Activated B cell treated with CpG ODN at 0.5 μM for 24 hours (primary cell): ENCODE measurements at regions of chr19 and their contacts with region 1.

Region 1: GRCh38 chr19:43519436-43520088 is 7.4 kb downstream of the ETHE1 start:
- DNase-seq: peak; percentile 57
- ATAC-seq: peak; percentile 51
- H3K4me3 Mint-ChIP-seq: peak overlapping the region; percentile 44
- H3K27ac Mint-ChIP-seq: peak overlapping the region; percentile 15
- H3K4me1 Mint-ChIP-seq: peaks cover 18% of the 10 kb centered on the region
- H3K27me3 Mint-ChIP-seq: no peaks in the 10 kb centered on the region
- CTCF ChIP-seq: peak; percentile 62

Region 2: DNA sequence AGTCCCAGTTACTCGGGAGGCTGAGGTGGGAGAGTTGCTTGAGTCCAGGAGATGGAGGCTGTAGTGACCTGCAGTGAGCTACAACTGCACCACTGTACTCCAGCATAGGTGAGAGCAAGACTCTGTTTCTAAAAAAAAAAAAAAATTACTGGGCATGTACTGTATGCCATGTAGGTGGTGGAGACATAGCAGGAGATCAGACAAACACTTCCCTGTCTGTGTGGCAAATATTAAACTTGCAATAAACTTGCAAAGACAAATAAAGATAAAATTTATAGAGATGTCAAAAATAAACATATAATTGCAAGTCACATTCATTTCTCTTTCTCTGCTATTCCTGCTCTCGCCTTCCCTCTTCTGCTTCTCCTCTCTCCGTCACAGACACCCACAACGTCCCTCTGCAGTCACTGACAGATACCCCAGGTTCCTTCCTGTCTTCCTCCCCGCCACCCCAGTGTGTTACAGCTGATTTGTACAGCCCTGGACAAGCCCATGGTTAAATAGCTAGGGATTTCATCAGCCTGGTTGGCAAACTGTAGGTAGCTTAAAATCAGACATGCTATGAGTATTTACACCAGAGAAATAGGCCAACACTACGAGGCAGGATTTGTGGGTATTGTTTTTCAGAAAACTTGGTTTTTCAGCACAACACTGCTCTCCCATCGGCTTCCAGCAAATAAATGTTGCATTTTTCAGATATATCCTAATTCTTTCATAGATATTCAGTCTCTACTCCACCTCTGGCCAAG is 167.4 kb before region 1 on chr19:
- CTCF ChIA-PET with region 1: no interaction called
- POLR2A ChIA-PET with region 1: no interaction called
- intact Hi-C with region 1: no loop called
- DNase-seq: no peak
- ATAC-seq: no peak
- H3K4me3 Mint-ChIP-seq: no peak overlapping the region
- H3K27ac Mint-ChIP-seq: no peak overlapping the region
- H3K4me1 Mint-ChIP-seq: no peaks in the 10 kb centered on the region
- H3K27me3 Mint-ChIP-seq: peaks cover 13% of the 10 kb centered on the region
- CTCF ChIP-seq: no peak

Region 3: DNA sequence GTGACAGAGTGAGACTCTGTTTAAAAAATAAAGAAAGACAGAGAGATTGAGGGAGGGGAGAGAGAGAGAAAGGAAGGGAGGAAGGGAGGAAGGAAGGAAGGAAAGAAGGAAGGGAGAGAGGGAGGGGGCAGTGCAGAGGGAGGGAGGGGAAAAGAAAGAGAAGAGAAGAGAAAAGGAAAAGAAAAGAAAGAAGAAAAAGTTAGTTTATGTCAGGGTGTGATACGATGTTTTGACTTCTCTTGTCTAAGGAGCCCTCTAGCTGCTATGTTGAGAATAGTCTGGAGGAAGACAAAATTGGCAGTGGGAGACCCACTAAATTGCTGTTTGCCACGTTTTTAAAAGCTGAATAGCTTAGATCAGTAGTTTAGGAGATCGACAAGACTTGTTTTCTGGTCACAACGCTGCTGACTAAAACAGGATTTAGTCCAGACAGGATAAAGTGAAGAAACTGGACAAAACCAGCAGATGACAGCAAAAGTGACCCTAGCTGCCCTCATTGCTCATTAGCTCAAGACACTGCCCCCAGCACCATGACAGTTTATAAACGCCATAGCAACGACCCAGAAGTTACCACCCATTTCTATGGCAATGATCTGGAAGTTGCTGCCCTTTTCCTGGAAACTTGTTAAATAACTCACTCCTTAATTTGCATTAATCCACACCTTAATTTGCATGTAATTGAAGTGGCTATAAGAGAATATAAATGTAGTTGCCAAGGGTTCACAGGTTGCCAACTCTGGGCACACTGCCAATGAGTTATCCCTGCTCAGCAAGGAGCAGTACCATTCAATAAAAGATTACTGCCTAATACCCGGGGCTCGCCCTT is 93.8 kb before region 1 on chr19:
- CTCF ChIA-PET with region 1: interaction called, 55 read pairs
- POLR2A ChIA-PET with region 1: no interaction called
- intact Hi-C with region 1: no loop called
- DNase-seq: no peak
- ATAC-seq: no peak
- H3K4me3 Mint-ChIP-seq: no peak overlapping the region
- H3K27ac Mint-ChIP-seq: no peak overlapping the region
- H3K4me1 Mint-ChIP-seq: peaks cover 8% of the 10 kb centered on the region
- H3K27me3 Mint-ChIP-seq: no peaks in the 10 kb centered on the region
- CTCF ChIP-seq: no peak

Region 4: DNA sequence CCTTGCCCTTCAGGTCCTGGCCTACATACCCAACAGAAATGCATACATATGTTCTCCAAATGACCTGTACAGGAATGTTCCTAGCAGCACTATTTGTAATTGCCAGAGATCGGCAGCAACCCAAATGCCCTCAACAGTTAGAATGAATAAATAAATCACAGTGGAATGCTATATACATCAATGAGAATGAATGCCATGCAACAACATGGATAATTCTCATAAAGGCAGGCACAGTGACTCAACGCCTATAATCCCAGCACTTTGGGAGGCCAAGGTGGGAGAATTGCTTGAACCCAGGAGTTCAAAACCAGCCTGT is 86.2 kb before region 1 on chr19:
- CTCF ChIA-PET with region 1: interaction called, 55 read pairs
- POLR2A ChIA-PET with region 1: interaction called, 15 read pairs
- intact Hi-C with region 1: no loop called
- DNase-seq: no peak
- ATAC-seq: no peak
- H3K4me3 Mint-ChIP-seq: no peak overlapping the region
- H3K27ac Mint-ChIP-seq: no peak overlapping the region
- H3K4me1 Mint-ChIP-seq: peaks cover 33% of the 10 kb centered on the region
- H3K27me3 Mint-ChIP-seq: no peaks in the 10 kb centered on the region
- CTCF ChIP-seq: no peak

Region 5: GRCh38 chr19:43438291-43439096 is 81.1 kb before region 1 on chr19:
- CTCF ChIA-PET with region 1: interaction called, 55 read pairs
- POLR2A ChIA-PET with region 1: interaction called, 4 read pairs
- intact Hi-C with region 1: no loop called
- DNase-seq: no peak
- ATAC-seq: no peak
- H3K4me3 Mint-ChIP-seq: peak overlapping the region; percentile 38
- H3K27ac Mint-ChIP-seq: peak overlapping the region; percentile 46
- H3K4me1 Mint-ChIP-seq: peaks cover 30% of the 10 kb centered on the region
- H3K27me3 Mint-ChIP-seq: no peaks in the 10 kb centered on the region
- CTCF ChIP-seq: no peak

Region 6: DNA sequence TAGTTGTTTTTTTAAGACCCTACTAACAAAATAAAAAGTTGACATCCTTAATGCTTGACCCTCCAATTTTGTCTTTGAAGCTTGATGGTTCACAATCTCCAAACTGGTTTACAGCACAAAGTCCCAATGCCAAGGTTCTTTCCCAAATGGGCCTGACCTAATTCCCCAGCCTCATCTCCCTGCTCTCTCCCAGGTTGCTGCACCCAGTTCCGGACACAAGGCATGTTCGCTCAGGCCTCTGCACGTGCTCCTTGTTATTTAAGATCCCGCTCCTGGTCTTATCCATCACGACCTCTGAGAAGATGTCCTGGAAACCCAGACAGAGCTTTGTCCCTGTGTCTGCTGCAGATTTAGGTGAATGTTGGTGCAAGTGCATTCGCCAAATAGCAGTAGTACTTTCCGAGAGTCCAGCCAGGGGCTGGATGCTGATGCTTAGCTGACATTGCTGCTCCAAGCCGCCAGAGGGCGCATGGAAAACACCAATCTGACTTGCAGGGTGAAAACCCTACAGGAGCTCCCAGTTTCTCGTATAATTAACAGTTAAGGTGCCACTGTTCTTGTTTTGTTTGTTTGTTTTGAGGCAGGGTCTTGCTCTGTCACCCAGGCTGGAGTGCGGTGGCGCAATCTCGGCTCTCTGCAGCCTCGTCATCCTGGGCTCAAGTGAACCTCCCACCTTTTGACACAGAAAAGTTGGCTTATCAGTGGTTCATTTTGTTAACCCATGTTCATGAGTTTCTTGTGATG is 72.6 kb before region 1 on chr19:
- CTCF ChIA-PET with region 1: interaction called, 300 read pairs
- POLR2A ChIA-PET with region 1: interaction called, 37 read pairs
- intact Hi-C with region 1: loop called (anchors 1 kb)
- DNase-seq: peak; percentile 67
- ATAC-seq: peak; percentile 90
- H3K4me3 Mint-ChIP-seq: no peak overlapping the region
- H3K27ac Mint-ChIP-seq: no peak overlapping the region
- H3K4me1 Mint-ChIP-seq: peaks cover 6% of the 10 kb centered on the region
- H3K27me3 Mint-ChIP-seq: no peaks in the 10 kb centered on the region
- CTCF ChIP-seq: peak; percentile 47

Region 7: DNA sequence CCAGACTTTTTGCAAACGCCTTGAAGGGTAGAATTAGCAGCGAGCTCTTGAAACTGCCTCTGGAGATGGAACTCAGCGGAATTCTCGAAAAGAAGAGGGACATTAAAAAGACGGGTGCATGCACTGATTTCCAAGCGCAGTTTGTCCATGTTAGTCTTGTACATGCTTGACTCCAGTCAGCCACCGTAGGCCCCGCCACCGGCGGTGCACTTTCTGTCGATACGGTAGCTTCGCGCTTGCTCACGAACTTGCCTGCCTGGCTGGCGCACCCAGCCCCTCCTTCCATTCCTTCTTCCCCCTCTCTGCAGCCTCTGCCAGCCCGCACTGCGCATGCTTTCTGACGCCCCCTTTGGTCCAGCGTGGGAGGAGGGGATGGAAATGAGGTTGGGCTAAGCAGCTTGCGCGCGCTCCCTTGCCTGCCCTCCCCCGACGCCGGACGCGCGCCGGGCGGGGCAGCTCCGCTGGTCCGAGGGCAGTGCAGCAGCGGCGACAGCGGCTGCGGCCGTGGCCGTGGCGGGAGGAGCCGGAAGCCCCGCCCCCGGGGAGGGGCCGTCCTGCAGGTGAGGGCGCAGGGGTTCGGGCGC is 13.5 kb after region 1 on chr19 and contains the start of gene ZNF575:
- CTCF ChIA-PET with region 1: interaction called, 19 read pairs
- POLR2A ChIA-PET with region 1: interaction called, 7 read pairs
- intact Hi-C with region 1: no loop called
- DNase-seq: peak; percentile 77
- ATAC-seq: peak; percentile 45
- H3K4me3 Mint-ChIP-seq: peak within 1 kb of the TSS; percentile 97
- H3K27ac Mint-ChIP-seq: peak within 1 kb of the TSS; percentile 98
- H3K4me1 Mint-ChIP-seq: peaks cover 19% of the 10 kb centered on the region
- H3K27me3 Mint-ChIP-seq: no peaks in the 10 kb centered on the region
- CTCF ChIP-seq: no peak
- total RNA-seq, gene ZNF575: 1.9 and 3.4 TPM in 2 replicates

Region 8: GRCh38 chr19:43548706-43549105 is 29.1 kb after region 1 on chr19:
- CTCF ChIA-PET with region 1: no interaction called
- POLR2A ChIA-PET with region 1: no interaction called
- intact Hi-C with region 1: no loop called
- DNase-seq: no peak
- ATAC-seq: no peak
- H3K4me3 Mint-ChIP-seq: no peak overlapping the region
- H3K27ac Mint-ChIP-seq: no peak overlapping the region
- H3K4me1 Mint-ChIP-seq: no peaks in the 10 kb centered on the region
- H3K27me3 Mint-ChIP-seq: no peaks in the 10 kb centered on the region
- CTCF ChIP-seq: no peak